ENCODE measurements at regions of chr17 and their contacts with region 1.

Region 1: GRCh38 chr17:78396441-78397337 is 18.2 kb downstream of the PGS1 start:
- H3K4me3 ChIP-seq: no peak overlapping the region
- H3K27ac ChIP-seq: no peak overlapping the region
- H3K4me1 ChIP-seq: no peaks in the 10 kb centered on the region
- CTCF ChIP-seq: no peak

Region 2: DNA sequence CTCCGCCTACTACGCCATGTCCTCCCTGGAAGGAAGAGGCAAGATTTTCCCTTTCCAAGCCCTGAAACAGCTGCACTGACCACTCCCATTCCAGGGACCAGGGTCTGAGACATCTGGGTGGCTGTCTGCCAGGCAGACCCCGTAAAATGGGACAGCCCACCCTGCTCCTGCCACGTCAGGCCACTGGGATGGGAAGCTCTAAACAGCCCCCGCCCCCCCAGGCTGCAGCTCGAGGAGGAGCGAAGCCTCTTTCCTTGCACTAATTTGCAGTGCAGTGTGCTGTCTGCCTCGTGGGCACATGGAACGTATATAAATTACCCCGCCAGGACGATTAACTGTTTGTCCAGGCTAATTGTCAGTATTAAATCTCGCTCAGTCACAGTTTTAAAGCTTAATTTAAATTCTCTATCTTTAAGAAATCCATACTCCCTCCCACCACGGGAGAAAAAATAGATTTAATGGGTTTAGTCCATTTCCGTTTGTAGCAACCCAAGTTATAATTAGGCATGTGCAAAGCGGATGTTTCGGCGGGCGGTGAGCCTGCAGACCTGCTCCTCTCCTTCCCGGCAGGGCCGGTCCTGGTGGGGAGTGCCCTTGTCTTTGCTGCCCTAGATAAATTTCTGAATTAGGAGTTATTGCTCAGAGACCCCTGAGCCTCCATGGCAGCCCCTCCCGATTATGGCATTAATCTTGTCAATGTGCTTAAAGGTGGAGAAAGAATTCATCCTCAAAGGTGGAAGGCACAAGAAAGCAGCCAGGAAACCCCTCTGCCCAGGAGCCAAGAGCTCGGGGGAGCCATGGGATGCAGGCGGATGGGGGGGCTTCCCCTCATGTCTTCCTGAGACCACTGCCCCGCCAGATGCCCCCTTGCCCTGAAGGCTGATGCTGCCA is 706.2 kb before region 1 on chr17:
- CTCF ChIA-PET with region 1: no interaction called
- POLR2A ChIA-PET with region 1: no interaction called
- H3K4me3 ChIP-seq: no peak overlapping the region
- H3K27ac ChIP-seq: no peak overlapping the region
- H3K4me1 ChIP-seq: peaks cover 3% of the 10 kb centered on the region; the same call in 1 of the 2 replicates
- CTCF ChIP-seq: no peak

Region 3: DNA sequence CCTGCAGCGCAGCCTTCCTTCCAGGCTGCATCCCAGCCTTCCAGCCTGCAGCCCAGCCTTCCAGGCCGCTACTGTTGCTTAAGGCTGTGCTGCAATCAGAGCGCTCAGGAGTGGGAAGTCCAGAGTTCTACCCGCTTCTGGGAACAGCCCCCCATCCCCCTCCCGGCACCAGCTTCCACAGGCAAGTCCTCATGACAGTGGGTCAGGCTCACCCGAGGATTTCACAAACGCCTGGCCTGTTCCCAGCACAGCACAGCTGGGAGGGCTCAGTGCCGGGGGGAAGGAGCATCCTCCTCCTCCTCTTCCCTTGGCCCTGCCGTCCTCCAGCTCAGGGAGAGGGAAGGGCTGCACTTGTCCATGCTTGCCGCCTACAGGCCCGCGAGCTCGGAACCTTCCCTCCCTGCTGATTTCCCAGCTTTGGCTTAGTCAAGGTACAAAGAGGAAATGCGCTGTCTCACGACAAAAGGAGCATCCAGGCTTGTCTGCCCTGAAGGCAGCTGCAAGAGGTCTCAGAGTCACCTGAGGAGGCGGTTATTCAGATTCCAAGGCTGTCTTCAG is 45.2 kb before region 1 on chr17:
- CTCF ChIA-PET with region 1: no interaction called
- POLR2A ChIA-PET with region 1: no interaction called
- H3K4me3 ChIP-seq: no peak overlapping the region
- H3K27ac ChIP-seq: no peak overlapping the region
- H3K4me1 ChIP-seq: peaks cover 14% of the 10 kb centered on the region
- CTCF ChIP-seq: no peak

Region 4: DNA sequence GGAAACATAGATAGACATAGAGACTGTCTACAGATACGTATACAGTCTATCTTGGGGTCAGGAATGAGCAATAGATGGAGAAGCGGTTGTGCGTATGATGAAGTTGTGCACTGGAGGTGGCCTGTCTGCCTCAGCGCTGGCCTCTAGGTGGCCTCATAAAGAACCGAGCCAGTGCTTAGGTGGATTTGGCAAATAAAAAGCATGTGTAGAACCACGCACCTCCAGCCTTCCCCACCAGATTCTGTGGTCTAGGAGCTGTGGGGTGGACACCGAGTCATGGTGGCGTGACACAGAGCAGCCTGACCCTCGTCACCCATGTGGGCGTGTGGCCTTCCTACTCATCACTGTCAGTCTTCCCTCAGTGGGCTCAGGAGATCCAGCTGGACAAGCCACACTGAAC is 15.7 kb after region 1 on chr17:
- CTCF ChIA-PET with region 1: interaction called, 11 read pairs
- POLR2A ChIA-PET with region 1: interaction called, 5 read pairs
- H3K4me3 ChIP-seq: no peak overlapping the region
- H3K27ac ChIP-seq: no peak overlapping the region
- H3K4me1 ChIP-seq: peaks cover 10% of the 10 kb centered on the region
- CTCF ChIP-seq: peak; percentile 51; the same call in 1 of the 2 replicates

Measured in HEK293 (cell line).